ENCODE measurements at regions of chr2 and their contacts with region 1.

Region 1: DNA sequence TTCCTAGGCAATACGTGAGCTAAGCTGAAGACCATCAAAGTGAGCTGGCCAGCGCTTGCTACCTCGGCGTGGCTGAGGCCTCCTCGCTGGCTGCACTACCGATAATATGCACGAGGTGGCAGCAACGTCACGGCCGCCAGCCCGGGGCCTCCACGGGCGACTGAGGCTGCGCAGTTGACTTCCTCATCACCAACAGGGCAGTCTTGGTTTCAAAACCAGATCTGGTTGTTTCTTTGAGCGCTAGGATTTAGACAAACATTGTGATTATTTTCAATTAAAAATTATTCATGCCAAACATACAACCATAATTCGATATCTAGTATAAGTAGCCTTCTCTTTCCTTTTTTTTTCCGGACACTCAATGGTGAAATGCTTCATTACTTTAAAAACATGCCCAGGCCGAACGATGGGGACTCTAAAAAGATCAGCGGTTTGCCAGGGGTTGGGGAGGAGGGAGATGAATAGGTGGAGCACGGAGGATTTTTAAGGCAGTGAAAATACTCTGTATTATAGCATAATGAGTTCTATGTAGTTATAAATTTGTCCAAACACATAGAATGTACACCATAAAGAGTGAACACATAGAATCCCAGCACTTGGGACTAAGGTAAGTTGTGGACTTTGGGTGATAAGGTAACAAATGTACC is 52.0 kb downstream of the CYBRD1 start:
- DNase-seq: peak; percentile 67 to 88 (median 76)
- ATAC-seq: peak; percentile 99
- H3K4me3 ChIP-seq: no peak overlapping the region
- H3K4me3 Mint-ChIP-seq: no peak overlapping the region
- H3K27ac ChIP-seq: no peak overlapping the region
- H3K27ac Mint-ChIP-seq: peak overlapping the region; percentile 54
- H3K4me1 ChIP-seq: peaks cover 6% of the 10 kb centered on the region
- H3K4me1 Mint-ChIP-seq: peaks cover 6% of the 10 kb centered on the region
- H3K27me3 ChIP-seq: no peaks in the 10 kb centered on the region
- H3K27me3 Mint-ChIP-seq: no peaks in the 10 kb centered on the region
- CTCF ChIP-seq: peak; percentile 92

Region 2: GRCh38 chr2:172704072-172704936 is 1130.0 kb after region 1 on chr2:
- CTCF ChIA-PET with region 1: no interaction called
- POLR2A ChIA-PET with region 1: no interaction called
- intact Hi-C with region 1: loop called in 1 of 2 experiments (anchors 10 kb)
- DNase-seq: peak in 3 of 14 experiments; percentile 8 to 22 (median 10)
- ATAC-seq: no peak
- H3K4me3 ChIP-seq: no peak overlapping the region
- H3K4me3 Mint-ChIP-seq: no peak overlapping the region
- H3K27ac ChIP-seq: no peak overlapping the region
- H3K27ac Mint-ChIP-seq: no peak overlapping the region
- H3K4me1 ChIP-seq: no peaks in the 10 kb centered on the region
- H3K4me1 Mint-ChIP-seq: no peaks in the 10 kb centered on the region
- H3K27me3 ChIP-seq: no peaks in the 10 kb centered on the region
- H3K27me3 Mint-ChIP-seq: peaks cover 14% of the 10 kb centered on the region
- CTCF ChIP-seq: peak; percentile 51